ENCODE measurements at regions of chr1 and their contacts with region 1.

Region 1: DNA sequence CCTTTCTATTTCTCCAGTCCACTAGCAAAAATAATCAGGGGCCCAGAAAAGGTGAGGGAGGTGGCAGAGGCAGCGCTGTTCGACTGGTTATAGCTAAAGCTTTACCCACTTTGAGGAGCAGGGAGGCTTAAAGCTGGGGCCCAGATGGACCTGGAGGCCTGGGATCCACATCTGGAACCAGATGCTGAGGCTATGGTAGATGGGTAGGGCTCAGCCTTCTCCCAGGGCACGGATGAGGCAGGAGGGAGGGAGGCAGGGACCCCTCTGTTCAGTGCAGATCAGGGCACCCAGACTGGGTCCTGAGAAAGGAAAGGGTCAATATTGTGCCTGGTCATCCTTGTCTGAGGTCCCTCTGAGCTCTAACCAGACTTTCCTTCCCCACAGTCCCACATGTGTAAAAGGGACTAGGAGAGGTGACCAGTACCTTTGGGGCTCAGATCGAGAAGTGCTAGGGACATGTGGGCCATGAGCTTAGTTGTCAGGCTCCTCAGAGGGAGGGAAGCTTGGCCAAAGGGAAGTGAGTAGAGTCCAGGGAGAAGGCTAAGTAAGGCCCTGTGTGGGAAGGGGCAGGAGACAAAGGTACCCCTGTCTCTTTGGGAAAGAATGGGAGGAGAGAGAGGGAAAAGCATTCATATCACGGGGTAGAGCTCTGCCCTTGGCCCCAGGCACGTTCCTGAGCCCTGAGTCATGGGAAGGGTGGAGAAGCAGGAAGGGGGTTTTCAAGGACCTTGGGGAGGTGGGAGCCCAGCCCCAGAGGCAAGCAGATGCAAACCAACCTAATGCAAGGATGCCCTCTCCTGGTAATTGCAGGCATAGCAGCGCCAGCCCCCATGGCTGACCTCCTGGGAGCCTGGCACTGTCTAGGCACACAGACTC is 15.4 kb downstream of the LMNA start:
- DNase-seq: peak; percentile 87
- ATAC-seq: peak; percentile 84
- H3K4me3 ChIP-seq: peak overlapping the region in 1 of 2 experiments; percentile 28; a peak in 2 of 4 replicates
- H3K27ac ChIP-seq: peak overlapping the region; percentile 95
- H3K4me1 ChIP-seq: peaks cover 55% of the 10 kb centered on the region
- H3K27me3 ChIP-seq: no peaks in the 10 kb centered on the region
- CTCF ChIP-seq: peak; percentile 93

Region 2: DNA sequence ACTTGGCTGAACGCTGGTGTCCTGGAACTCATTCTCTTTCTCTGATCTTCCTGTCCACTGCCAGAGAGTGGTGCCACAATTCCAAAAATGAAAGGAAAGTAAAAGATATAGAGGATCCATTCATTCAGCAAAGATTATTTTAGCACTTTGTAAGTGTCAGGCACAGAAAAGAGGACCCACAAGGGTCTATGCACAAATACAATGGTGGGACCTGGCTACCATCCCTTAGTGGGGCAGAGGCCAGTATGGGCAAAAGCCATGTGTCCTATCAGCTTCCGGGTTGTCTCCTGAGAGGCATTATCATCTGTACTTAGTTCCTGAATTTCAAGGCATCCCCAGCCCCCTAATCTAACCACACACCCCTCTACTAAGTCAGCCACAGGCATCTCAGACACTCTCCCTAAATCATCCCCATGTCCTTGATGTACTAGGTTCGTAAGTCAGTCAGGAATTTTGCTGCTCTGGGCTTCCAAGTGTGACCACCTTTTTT is 128.2 kb before region 1 on chr1:
- CTCF ChIA-PET with region 1: no interaction called
- POLR2A ChIA-PET with region 1: interaction called, 13 read pairs
- in situ Hi-C with region 1: no loop called
- intact Hi-C with region 1: no loop called
- DNase-seq: no peak
- ATAC-seq: peak; percentile 59
- H3K4me3 ChIP-seq: no peak overlapping the region
- H3K27ac ChIP-seq: peak overlapping the region; percentile 70
- H3K4me1 ChIP-seq: peaks cover 25% of the 10 kb centered on the region
- H3K27me3 ChIP-seq: no peaks in the 10 kb centered on the region
- CTCF ChIP-seq: no peak

Region 3: DNA sequence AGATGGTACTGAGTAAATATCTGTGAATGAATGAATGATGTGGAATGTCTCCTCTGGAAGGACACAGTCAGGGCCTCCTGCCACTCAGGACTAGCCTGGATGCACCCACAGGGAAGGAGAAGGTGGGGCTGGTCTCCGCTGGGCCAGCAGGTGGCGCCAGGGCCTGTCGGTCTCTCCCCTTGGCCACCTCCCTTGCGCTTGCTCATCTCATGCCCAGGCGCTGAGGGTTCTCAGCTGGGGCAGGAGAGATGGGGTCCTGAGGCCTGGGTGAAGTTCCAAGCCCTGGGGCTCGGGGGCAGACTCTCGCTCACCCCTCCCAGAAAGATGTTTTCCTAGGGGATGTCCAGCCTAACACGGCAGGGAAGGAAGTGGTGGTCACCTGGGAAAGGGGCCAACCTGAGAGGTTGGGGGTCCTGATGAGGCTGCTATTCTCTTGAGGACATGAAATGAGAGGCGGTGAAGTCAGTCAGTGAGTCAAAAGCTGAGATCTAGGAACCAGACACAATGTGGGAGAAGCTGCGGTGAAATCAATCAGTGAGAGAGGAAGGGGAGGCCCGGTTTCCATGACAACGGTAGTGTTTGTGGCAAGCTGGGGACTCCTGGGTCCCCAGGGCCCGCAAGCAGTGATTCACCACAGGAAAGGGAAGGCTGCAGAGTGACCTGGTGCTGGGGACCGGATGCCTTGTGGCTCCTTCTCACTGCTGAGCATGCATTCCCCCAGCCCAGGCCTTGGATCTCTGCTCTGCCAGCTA is 33.1 kb before region 1 on chr1:
- CTCF ChIA-PET with region 1: interaction called, 23 read pairs
- POLR2A ChIA-PET with region 1: interaction called, 3 read pairs
- in situ Hi-C with region 1: no loop called
- intact Hi-C with region 1: loop called (anchors 1 kb)
- DNase-seq: peak; percentile 71
- ATAC-seq: peak; percentile 98
- H3K4me3 ChIP-seq: no peak overlapping the region
- H3K27ac ChIP-seq: peak overlapping the region; percentile 82
- H3K4me1 ChIP-seq: peaks cover 15% of the 10 kb centered on the region; the same call in 1 of the 2 replicates
- H3K27me3 ChIP-seq: no peaks in the 10 kb centered on the region
- CTCF ChIP-seq: peak; percentile 97

Region 4: GRCh38 chr1:156114101-156114916 is 15.6 kb before region 1 on chr1 and contains the start of gene LMNA:
- CTCF ChIA-PET with region 1: interaction called, 12 read pairs
- POLR2A ChIA-PET with region 1: interaction called, 28 read pairs
- in situ Hi-C with region 1: no loop called
- intact Hi-C with region 1: no loop called
- DNase-seq: peak; percentile 82
- ATAC-seq: peak; percentile 84
- H3K4me3 ChIP-seq: peak within 1 kb of the TSS; percentile 78 to 99
- H3K27ac ChIP-seq: peak within 1 kb of the TSS; percentile 96
- H3K4me1 ChIP-seq: peaks cover 41% of the 10 kb centered on the region
- H3K27me3 ChIP-seq: no peaks in the 10 kb centered on the region
- CTCF ChIP-seq: no peak
- total RNA-seq, gene LMNA: 691 TPM